CD4-positive, alpha-beta memory T cell (primary cell): ENCODE measurements at regions of chr3 and their contacts with region 1.

Region 1: GRCh38 chr3:38039101-38039898 is at the start of gene DLEC1:
- DNase-seq: peak; percentile 88 to 93 (median 91)
- H3K4me3 ChIP-seq: peak within 1 kb of the TSS; percentile 44 to 78
- H3K4me3 Mint-ChIP-seq: peak within 1 kb of the TSS; percentile 57 to 94 (median 85)
- H3K27ac ChIP-seq: peak within 1 kb of the TSS; percentile 85
- H3K27ac Mint-ChIP-seq: peak within 1 kb of the TSS; percentile 90 to 99 (median 97)
- H3K4me1 ChIP-seq: peaks cover 38% of the 10 kb centered on the region
- H3K4me1 Mint-ChIP-seq: peaks cover 23 to 45% (median 32%) of the 10 kb centered on the region in 4 donors
- H3K27me3 ChIP-seq: no peaks in the 10 kb centered on the region
- H3K27me3 Mint-ChIP-seq: no peaks in the 10 kb centered on the region
- total RNA-seq, gene DLEC1: 13.2 to 15.1 TPM

Region 2: GRCh38 chr3:38004415-38005076 is 34.8 kb before region 1 on chr3:
- CTCF ChIA-PET with region 1: interaction called, 66 read pairs
- POLR2A ChIA-PET with region 1: interaction called, 48 read pairs
- intact Hi-C with region 1: loop called (anchors 1 kb)
- DNase-seq: peak; percentile 41 to 50 (median 48)
- H3K4me3 ChIP-seq: no peak overlapping the region
- H3K4me3 Mint-ChIP-seq: peak overlapping the region in 1 of 8 donors; percentile 52
- H3K27ac ChIP-seq: no peak overlapping the region
- H3K27ac Mint-ChIP-seq: peak overlapping the region; percentile 41 to 92 (median 85)
- H3K4me1 ChIP-seq: peaks cover 6% of the 10 kb centered on the region
- H3K4me1 Mint-ChIP-seq: peaks cover 10 to 34% (median 23%) of the 10 kb centered on the region in 4 donors
- H3K27me3 ChIP-seq: no peaks in the 10 kb centered on the region
- H3K27me3 Mint-ChIP-seq: no peaks in the 10 kb centered on the region

Region 3: GRCh38 chr3:38022896-38023709 is 16.2 kb before region 1 on chr3:
- CTCF ChIA-PET with region 1: interaction called, 10 read pairs
- POLR2A ChIA-PET with region 1: interaction called, 9 read pairs
- intact Hi-C with region 1: no loop called
- DNase-seq: no peak
- H3K4me3 ChIP-seq: peak overlapping the region; percentile 70 to 91
- H3K4me3 Mint-ChIP-seq: peak overlapping the region; percentile 86 to 95 (median 92)
- H3K27ac ChIP-seq: peak overlapping the region; percentile 87
- H3K27ac Mint-ChIP-seq: peak overlapping the region; percentile 91 to 100 (median 99)
- H3K4me1 ChIP-seq: peaks cover 33% of the 10 kb centered on the region
- H3K4me1 Mint-ChIP-seq: peaks cover 30 to 74% (median 47%) of the 10 kb centered on the region in 4 donors
- H3K27me3 ChIP-seq: no peaks in the 10 kb centered on the region
- H3K27me3 Mint-ChIP-seq: no peaks in the 10 kb centered on the region

Region 4: DNA sequence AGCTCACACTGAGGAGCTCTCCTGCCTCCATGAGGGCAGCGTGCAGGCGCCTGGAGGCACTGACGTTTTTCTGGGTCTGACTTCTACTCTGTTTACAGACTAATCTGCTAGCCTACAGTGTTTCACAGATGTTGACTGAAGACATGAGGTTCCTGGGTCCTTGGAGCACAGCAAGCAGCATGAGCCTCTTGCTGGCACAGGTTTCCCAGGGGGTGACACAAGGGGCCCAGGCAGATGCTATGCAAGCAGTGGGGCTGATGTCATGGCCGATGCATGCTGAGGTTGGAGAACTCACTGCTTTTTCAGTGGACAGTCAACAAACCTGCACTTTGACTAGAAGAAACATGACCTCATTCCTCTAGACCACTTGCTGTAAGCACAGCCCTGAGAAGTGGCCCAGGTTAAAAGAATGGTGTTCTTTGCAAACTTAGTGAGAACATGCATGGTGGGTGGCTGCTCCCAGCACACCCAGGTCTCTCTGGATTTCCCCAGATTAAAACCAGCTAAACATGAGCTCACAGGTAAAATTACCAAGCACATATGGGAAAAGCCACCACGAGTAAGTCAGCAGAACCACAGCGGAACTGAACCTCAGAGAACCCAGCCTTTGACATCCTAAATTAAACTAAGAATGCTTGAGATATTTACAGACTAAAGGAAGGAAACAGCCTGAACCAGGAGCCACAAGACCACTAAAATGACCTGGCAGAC is 15.1 kb after region 1 on chr3:
- CTCF ChIA-PET with region 1: no interaction called
- POLR2A ChIA-PET with region 1: no interaction called
- intact Hi-C with region 1: no loop called
- DNase-seq: no peak
- H3K4me3 ChIP-seq: no peak overlapping the region
- H3K4me3 Mint-ChIP-seq: no peak overlapping the region
- H3K27ac ChIP-seq: no peak overlapping the region
- H3K27ac Mint-ChIP-seq: peak overlapping the region in 1 of 7 donors; percentile 19
- H3K4me1 ChIP-seq: no peaks in the 10 kb centered on the region
- H3K4me1 Mint-ChIP-seq: peaks cover 0 to 3% (median 1%) of the 10 kb centered on the region in 4 donors
- H3K27me3 ChIP-seq: no peaks in the 10 kb centered on the region
- H3K27me3 Mint-ChIP-seq: no peaks in the 10 kb centered on the region

Region 5: DNA sequence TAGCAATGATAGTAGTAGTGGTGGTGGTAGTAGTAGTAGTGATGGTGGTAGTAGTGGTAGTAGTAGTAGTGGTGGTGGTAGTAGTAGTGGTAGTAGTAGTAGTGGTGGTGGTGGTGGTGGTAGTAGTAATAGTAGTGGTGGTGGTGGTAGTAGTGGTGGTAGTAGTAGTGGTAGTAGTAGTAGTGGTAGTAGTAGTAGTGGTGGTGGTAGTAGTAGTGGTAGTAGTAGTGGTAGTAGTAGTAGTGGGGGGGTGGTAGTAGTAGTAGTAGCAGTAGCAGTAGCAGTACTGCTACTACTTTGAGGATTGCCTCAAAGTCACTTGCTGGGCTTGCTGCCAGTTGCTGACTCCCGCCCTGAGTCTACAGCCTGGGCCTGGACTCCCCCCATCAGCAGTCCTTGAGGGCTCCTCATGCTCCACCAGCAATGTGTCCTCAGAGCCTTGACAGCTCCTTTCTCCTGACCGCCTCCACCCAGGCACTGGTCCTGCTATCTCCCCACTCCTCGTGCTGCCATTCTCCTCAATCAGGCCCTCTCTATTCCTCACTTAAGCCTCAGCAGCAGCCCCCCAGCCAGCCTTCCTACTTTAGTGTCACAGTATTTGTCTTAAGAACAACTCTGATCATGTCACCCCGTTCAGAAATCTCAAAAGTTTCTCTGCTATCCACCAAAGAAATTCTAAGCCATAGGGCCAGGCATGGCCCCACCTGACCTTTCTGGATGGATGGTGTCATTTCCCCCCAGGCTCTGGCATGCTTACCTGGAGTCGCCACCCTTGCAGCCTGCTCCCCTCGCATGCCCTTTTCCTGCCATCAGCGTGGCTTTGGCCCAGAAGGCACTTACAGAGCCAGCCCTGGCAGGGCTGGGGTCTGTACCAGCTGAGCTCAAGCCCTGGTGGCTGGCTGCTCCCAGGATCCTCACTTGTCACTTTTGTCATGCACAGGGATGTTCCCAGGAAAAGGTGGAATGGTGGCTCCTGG is 45.3 kb after region 1 on chr3:
- CTCF ChIA-PET with region 1: no interaction called
- POLR2A ChIA-PET with region 1: no interaction called
- intact Hi-C with region 1: loop called (anchors 1 kb)
- DNase-seq: peak; percentile 47 to 77 (median 55)
- H3K4me3 ChIP-seq: no peak overlapping the region
- H3K4me3 Mint-ChIP-seq: peak overlapping the region in 6 of 8 donors; percentile 19 to 84 (median 62)
- H3K27ac ChIP-seq: no peak overlapping the region
- H3K27ac Mint-ChIP-seq: peak overlapping the region; percentile 35 to 97 (median 93)
- H3K4me1 ChIP-seq: no peaks in the 10 kb centered on the region
- H3K4me1 Mint-ChIP-seq: peaks cover 0 to 5% (median 4%) of the 10 kb centered on the region in 4 donors
- H3K27me3 ChIP-seq: no peaks in the 10 kb centered on the region
- H3K27me3 Mint-ChIP-seq: no peaks in the 10 kb centered on the region

Region 6: GRCh38 chr3:38164966-38165680 is 125.8 kb after region 1 on chr3 and contains the start of gene OXSR1:
- CTCF ChIA-PET with region 1: interaction called, 3 read pairs
- POLR2A ChIA-PET with region 1: interaction called, 22 read pairs
- intact Hi-C with region 1: loop called (anchors 1 kb)
- DNase-seq: peak; percentile 97 to 99 (median 99)
- H3K4me3 ChIP-seq: peak within 1 kb of the TSS; percentile 66 to 72
- H3K4me3 Mint-ChIP-seq: peak within 1 kb of the TSS; percentile 88 to 98 (median 94)
- H3K27ac ChIP-seq: peak within 1 kb of the TSS; percentile 95
- H3K27ac Mint-ChIP-seq: peak within 1 kb of the TSS; percentile 99 to 100 (median 100)
- H3K4me1 ChIP-seq: peaks cover 40% of the 10 kb centered on the region
- H3K4me1 Mint-ChIP-seq: peaks cover 31 to 52% (median 42%) of the 10 kb centered on the region in 4 donors
- H3K27me3 ChIP-seq: no peaks in the 10 kb centered on the region
- H3K27me3 Mint-ChIP-seq: no peaks in the 10 kb centered on the region
- total RNA-seq, gene OXSR1: 39.6 to 43.9 TPM

Region 7: GRCh38 chr3:38397320-38397719 is 358.0 kb after region 1 on chr3:
- CTCF ChIA-PET with region 1: no interaction called
- POLR2A ChIA-PET with region 1: no interaction called
- intact Hi-C with region 1: no loop called
- DNase-seq: peak in 1 of 5 donors; percentile 13
- H3K4me3 ChIP-seq: no peak overlapping the region
- H3K4me3 Mint-ChIP-seq: no peak overlapping the region
- H3K27ac ChIP-seq: no peak overlapping the region
- H3K27ac Mint-ChIP-seq: no peak overlapping the region
- H3K4me1 ChIP-seq: no peaks in the 10 kb centered on the region
- H3K4me1 Mint-ChIP-seq: no peaks in the 10 kb centered on the region
- H3K27me3 ChIP-seq: no peaks in the 10 kb centered on the region
- H3K27me3 Mint-ChIP-seq: no peaks in the 10 kb centered on the region